Sigmoid colon (tissue), 7 donors: ENCODE measurements at regions of chr22 and their contacts with region 1.

Region 1: GRCh38 chr22:36123673-36124630 is 36.6 kb downstream of the APOL3 start:
- DNase-seq: peak; percentile 98
- H3K4me3 ChIP-seq: peak overlapping the region in 3 of 4 donors; percentile 22 to 39 (median 30)
- H3K27ac ChIP-seq: peak overlapping the region; percentile 80 to 87 (median 84)
- H3K4me1 ChIP-seq: peaks cover 0 to 12% (median 7%) of the 10 kb centered on the region in 4 donors
- H3K27me3 ChIP-seq: no peaks in the 10 kb centered on the region
- CTCF ChIP-seq: peak; percentile 96 to 100 (median 98)
- EP300 ChIP-seq: peak in 2 of 4 donors; percentile 37 to 41
- POLR2A ChIP-seq: no peak

Region 2: GRCh38 chr22:35582861-35583670 is 540.9 kb before region 1 on chr22:
- intact Hi-C with region 1: loop called (anchors 5 kb)
- DNase-seq: peak; percentile 86
- H3K4me3 ChIP-seq: no peak overlapping the region
- H3K27ac ChIP-seq: peak overlapping the region in 3 of 4 donors; percentile 76 to 78 (median 77)
- H3K4me1 ChIP-seq: peaks cover 0 to 42% (median 31%) of the 10 kb centered on the region in 4 donors
- H3K27me3 ChIP-seq: no peaks in the 10 kb centered on the region
- CTCF ChIP-seq: peak; percentile 93 to 96 (median 95)
- EP300 ChIP-seq: no peak
- POLR2A ChIP-seq: no peak

Region 3: GRCh38 chr22:35840302-35840739 is 283.6 kb before region 1 on chr22:
- intact Hi-C with region 1: loop called (anchors 5 kb)
- DNase-seq: peak; percentile 94
- H3K4me3 ChIP-seq: peak overlapping the region; percentile 26 to 53 (median 46)
- H3K27ac ChIP-seq: peak overlapping the region; percentile 76 to 86 (median 82)
- H3K4me1 ChIP-seq: peaks cover 0 to 81% (median 52%) of the 10 kb centered on the region in 4 donors
- H3K27me3 ChIP-seq: no peaks in the 10 kb centered on the region
- CTCF ChIP-seq: no peak
- EP300 ChIP-seq: peak in 1 of 4 donors; percentile 3
- POLR2A ChIP-seq: peak in 1 of 2 donors; percentile 40

Region 4: DNA sequence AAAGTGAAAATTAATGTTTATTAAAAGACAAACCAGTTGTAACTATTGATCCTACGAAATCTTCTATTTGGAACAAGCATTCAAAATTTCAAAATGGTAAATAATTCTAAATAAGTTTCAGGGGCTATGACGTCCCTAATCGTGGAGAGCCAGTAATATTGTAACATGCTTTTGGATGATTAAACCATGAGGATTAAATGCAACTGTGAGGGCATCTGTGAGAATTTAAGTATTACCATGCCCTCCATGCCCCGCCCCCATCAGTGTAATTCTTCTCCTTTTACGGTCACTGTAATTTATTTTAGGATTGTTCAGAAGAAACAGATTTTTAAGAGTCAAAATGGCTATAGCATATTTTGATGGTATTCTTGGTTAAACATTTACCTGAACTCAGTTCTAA is 273.1 kb before region 1 on chr22:
- intact Hi-C with region 1: no loop called
- DNase-seq: no peak
- H3K4me3 ChIP-seq: no peak overlapping the region
- H3K27ac ChIP-seq: peak overlapping the region; percentile 50 to 77 (median 64)
- H3K4me1 ChIP-seq: peaks cover 0 to 55% (median 31%) of the 10 kb centered on the region in 4 donors
- H3K27me3 ChIP-seq: no peaks in the 10 kb centered on the region
- CTCF ChIP-seq: no peak
- EP300 ChIP-seq: no peak
- POLR2A ChIP-seq: no peak

Region 5: DNA sequence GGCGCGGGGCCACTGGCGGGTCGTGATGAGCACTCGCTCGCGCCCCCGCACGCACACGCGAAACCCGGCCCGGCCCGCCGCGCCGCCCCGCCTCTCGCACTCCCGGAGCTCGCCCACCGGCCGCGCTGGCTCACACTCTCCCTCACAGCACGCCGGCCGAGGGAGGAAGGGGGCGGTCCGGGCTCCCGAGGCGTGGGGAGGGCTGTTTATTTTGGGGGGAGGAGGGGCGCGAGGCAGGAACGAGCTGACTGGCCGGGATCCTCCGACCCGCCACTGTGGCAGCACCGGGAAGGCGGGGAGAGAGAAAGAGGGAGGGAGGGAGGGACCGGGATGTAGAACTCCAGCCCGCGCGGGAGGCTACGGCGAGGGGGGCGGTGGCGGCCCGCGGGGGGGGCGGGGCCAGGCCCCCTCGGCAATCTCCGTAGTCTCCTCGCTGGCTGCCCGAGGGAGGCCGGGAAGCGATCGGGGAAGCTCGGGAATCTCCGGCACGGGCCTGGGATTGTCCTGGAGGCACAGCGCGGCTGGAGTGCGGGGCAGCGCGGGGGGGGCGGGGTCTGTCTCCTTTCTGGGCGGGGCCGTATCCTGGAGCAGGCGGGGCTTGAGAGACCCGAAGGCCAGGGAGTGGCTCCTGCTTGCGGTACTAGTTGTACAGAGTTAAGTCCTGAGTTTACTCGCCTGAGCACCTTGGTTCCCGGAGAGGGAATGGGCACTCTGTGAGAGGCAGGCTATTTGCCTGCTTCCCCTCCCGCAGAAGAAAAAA is 95.1 kb before region 1 on chr22 and contains the start of gene RBFOX2:
- intact Hi-C with region 1: loop called (anchors 5 kb)
- DNase-seq: peak; percentile 99
- H3K4me3 ChIP-seq: peak within 1 kb of the TSS; percentile 64 to 95 (median 84)
- H3K27ac ChIP-seq: peak within 1 kb of the TSS; percentile 90 to 98 (median 97)
- H3K4me1 ChIP-seq: peaks cover 0 to 39% (median 27%) of the 10 kb centered on the region in 4 donors
- H3K27me3 ChIP-seq: no peaks in the 10 kb centered on the region
- CTCF ChIP-seq: no peak
- EP300 ChIP-seq: no peak
- POLR2A ChIP-seq: no peak
- total RNA-seq, gene RBFOX2: 138 to 164 (median 148) TPM

Region 6: DNA sequence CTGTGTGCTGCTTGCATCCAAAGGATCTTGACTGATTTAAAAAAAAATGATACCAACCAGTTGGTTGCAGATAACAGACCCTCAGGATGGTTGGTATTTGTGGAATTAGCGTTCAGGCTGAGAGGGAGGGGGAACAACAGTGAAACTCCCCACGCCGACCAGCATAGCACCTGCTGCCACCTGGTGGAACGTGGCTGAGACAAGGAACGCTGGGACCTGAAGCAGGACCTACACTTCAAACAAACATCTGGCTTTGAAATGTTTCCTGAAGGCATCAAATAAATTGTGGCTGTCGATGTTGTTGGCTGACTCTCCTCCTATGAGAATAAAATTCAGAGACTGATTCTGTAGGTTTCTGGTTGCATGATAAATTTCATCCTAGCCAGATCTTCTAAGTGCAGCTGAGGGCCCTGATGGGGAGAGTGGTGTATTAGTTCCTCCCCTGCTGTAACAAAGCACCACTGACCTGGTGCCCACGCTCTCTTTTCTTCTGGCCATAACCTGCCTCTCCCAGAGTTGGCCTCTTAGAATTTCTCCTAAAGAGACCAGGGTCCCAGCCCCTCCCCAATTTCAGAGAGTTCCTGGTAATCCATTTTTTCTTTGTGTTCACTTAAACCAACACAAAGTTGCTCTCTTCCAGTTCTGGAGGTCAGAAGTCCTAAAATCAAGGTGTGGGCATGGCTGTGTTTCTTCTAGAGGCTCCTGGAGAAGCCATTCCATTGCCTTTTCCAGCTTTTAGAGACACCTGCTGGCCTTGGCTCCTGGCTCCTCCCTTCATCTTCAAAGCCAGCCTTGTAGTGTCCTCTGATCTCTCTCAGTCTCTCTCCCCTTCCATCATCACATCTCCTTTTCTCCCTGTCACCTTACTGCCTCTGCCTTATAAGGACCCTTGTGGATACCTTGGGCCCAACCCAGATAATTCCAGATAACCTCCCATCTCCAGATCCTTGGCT is 98.1 kb after region 1 on chr22:
- intact Hi-C with region 1: no loop called
- DNase-seq: no peak
- H3K4me3 ChIP-seq: no peak overlapping the region
- H3K27ac ChIP-seq: no peak overlapping the region
- H3K4me1 ChIP-seq: peaks cover 0 to 21% (median 0%) of the 10 kb centered on the region in 4 donors
- H3K27me3 ChIP-seq: no peaks in the 10 kb centered on the region
- CTCF ChIP-seq: peak in 3 of 4 experiments; percentile 21 to 45 (median 35)
- EP300 ChIP-seq: no peak
- POLR2A ChIP-seq: no peak

Region 7: DNA sequence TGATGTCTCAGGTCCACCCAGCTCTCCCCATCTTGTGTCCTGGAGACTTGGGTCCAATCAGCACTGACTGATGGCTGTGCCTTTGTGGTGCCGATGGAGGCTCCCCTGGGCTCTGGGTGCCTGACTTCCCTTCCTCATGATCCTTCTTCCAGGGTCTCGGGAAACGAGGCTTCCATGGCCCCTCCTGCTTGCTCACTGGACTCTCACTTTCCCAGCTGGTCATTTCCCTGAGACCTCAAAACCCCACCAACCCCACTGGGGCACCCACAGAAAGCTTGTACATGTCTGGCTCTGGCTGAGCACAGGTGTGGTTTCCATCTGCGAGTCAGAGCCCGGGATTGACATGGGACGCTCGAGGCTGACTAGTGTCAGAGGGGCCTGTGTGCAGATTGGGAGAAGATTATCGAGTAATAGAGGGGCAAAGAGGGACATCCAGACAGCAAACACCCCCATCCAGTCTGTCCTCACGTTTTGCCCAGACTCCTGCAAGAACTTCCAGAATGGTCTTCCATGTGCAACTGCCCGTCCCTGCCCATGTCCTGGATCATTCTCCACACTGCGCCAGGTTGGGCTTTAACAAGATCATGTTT is 144.0 kb after region 1 on chr22:
- intact Hi-C with region 1: no loop called
- DNase-seq: no peak
- H3K4me3 ChIP-seq: no peak overlapping the region
- H3K27ac ChIP-seq: no peak overlapping the region
- H3K4me1 ChIP-seq: no peaks in the 10 kb centered on the region
- H3K27me3 ChIP-seq: no peaks in the 10 kb centered on the region
- CTCF ChIP-seq: no peak
- EP300 ChIP-seq: no peak
- POLR2A ChIP-seq: no peak